H1 (cell line): ENCODE measurements at regions of chr12 and their contacts with region 1.

Region 1: GRCh38 chr12:14629832-14630710 is 62.4 kb upstream of the PLBD1 start:
- DNase-seq: peak; percentile 27 to 86
- H3K4me3 ChIP-seq: no peak overlapping the region
- H3K27ac ChIP-seq: no peak overlapping the region
- H3K4me1 ChIP-seq: peaks cover 0 to 2% (median 0%) of the 10 kb centered on the region in 4 experiments; a peak in 1 of 7 replicates
- H3K27me3 ChIP-seq: peaks cover 0 to 1% (median 0%) of the 10 kb centered on the region in 4 experiments; a peak in 1 of 7 replicates
- CTCF ChIP-seq: peak; percentile 56 to 99 (median 92)
- EP300 ChIP-seq: no peak
- POLR2A ChIP-seq: no peak
- RAD21 ChIP-seq: peak; percentile 99 to 100

Region 2: DNA sequence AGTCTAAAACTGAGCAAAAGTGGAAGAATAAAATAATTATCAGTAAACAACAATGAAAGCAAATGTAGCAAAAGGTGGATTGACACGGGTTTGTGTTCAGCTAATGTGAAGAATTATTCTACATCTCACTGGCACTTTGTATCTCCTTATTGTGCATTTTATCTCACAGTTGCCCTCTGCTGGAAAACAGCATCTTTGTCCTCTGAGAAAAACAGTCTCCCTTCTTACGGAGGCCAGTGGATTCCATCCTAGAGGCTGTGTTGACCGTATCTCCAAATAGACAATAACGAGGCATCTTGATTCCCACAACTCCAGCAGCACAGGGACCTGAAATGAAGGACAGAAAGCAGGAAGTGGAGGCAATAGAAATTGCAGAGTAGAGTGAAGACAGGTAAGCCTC is 11.1 kb before region 1 on chr12:
- CTCF ChIA-PET with region 1: interaction called, 21 read pairs
- POLR2A ChIA-PET with region 1: no interaction called
- DNase-seq: no peak
- H3K4me3 ChIP-seq: no peak overlapping the region
- H3K27ac ChIP-seq: no peak overlapping the region
- H3K4me1 ChIP-seq: no peaks in the 10 kb centered on the region
- H3K27me3 ChIP-seq: peaks cover 0 to 2% (median 0%) of the 10 kb centered on the region in 4 experiments; a peak in 1 of 7 replicates
- CTCF ChIP-seq: peak in 2 of 3 experiments; percentile 34 to 57; a peak in 2 of 4 replicates
- EP300 ChIP-seq: no peak
- POLR2A ChIP-seq: no peak
- RAD21 ChIP-seq: peak; percentile 57 to 62

Region 3: GRCh38 chr12:14647028-14647750 is 17.1 kb after region 1 on chr12:
- CTCF ChIA-PET with region 1: no interaction called
- POLR2A ChIA-PET with region 1: no interaction called
- DNase-seq: no peak
- H3K4me3 ChIP-seq: no peak overlapping the region
- H3K27ac ChIP-seq: no peak overlapping the region
- H3K4me1 ChIP-seq: peaks cover 0 to 2% (median 0%) of the 10 kb centered on the region in 4 experiments; a peak in 1 of 7 replicates
- H3K27me3 ChIP-seq: no peaks in the 10 kb centered on the region; a peak in 1 of 7 replicates
- CTCF ChIP-seq: no peak
- EP300 ChIP-seq: no peak
- POLR2A ChIP-seq: no peak
- RAD21 ChIP-seq: no peak

Region 4: GRCh38 chr12:14664510-14664909 is 34.4 kb after region 1 on chr12:
- CTCF ChIA-PET with region 1: interaction called, 49 read pairs
- POLR2A ChIA-PET with region 1: interaction called, 3 read pairs
- DNase-seq: no peak
- H3K4me3 ChIP-seq: no peak overlapping the region
- H3K27ac ChIP-seq: no peak overlapping the region
- H3K4me1 ChIP-seq: peaks cover 0 to 3% (median 1%) of the 10 kb centered on the region in 4 experiments; a peak in 3 of 7 replicates
- H3K27me3 ChIP-seq: no peaks in the 10 kb centered on the region
- CTCF ChIP-seq: peak in 2 of 3 experiments; percentile 49 to 52; a peak in 2 of 4 replicates
- EP300 ChIP-seq: no peak
- POLR2A ChIP-seq: no peak
- RAD21 ChIP-seq: peak; percentile 75 to 82